GM12878 (cell line): ENCODE measurements at regions of chr15 and their contacts with region 1.

Region 1: GRCh38 chr15:52379395-52380106 is 83.9 kb upstream of the MYO5C start:
- DNase-seq: peak; percentile 91
- ATAC-seq: peak; percentile 71
- H3K4me3 ChIP-seq: peak overlapping the region; percentile 60
- H3K27ac ChIP-seq: peak overlapping the region; percentile 98
- H3K4me1 ChIP-seq: peaks cover 54% of the 10 kb centered on the region
- H3K27me3 ChIP-seq: no peaks in the 10 kb centered on the region
- CTCF ChIP-seq: 0 out of 6 replicates have a peak, but pooled peaks of 1 of the 3 experiments have one; percentile 6
- EP300 ChIP-seq: peak; percentile 42 to 68; a peak in 3 of 4 replicates
- POLR2A ChIP-seq: peak; percentile 56
- RAD21 ChIP-seq: no peak

Region 2: GRCh38 chr15:52018693-52019387 is 360.7 kb before region 1 on chr15 and contains the start of gene MAPK6:
- CTCF ChIA-PET with region 1: no interaction called
- POLR2A ChIA-PET with region 1: no interaction called
- RAD21 ChIA-PET with region 1: no interaction called
- SMC1A ChIA-PET with region 1: interaction called, 3 read pairs
- in situ Hi-C with region 1: loop called (anchors 5 kb)
- intact Hi-C with region 1: no loop called
- DNase-seq: peak; percentile 71
- ATAC-seq: peak; percentile 69
- H3K4me3 ChIP-seq: peak within 1 kb of the TSS; percentile 91
- H3K27ac ChIP-seq: peak within 1 kb of the TSS; percentile 99
- H3K4me1 ChIP-seq: peaks cover 15% of the 10 kb centered on the region
- H3K27me3 ChIP-seq: no peaks in the 10 kb centered on the region
- CTCF ChIP-seq: no peak
- EP300 ChIP-seq: peak in 1 of 2 experiments; percentile 61; a peak in 1 of 4 replicates
- POLR2A ChIP-seq: peak; percentile 88
- RAD21 ChIP-seq: no peak
- polyA plus RNA-seq, gene MAPK6: 20.6 to 23.4 TPM

Region 3: GRCh38 chr15:52438047-52438446 is 58.5 kb after region 1 on chr15:
- CTCF ChIA-PET with region 1: interaction called, 3 read pairs
- POLR2A ChIA-PET with region 1: no interaction called
- RAD21 ChIA-PET with region 1: interaction called, 3 read pairs
- SMC1A ChIA-PET with region 1: interaction called, 10 read pairs
- in situ Hi-C with region 1: no loop called
- intact Hi-C with region 1: no loop called
- DNase-seq: peak; percentile 3
- ATAC-seq: peak; percentile 48
- H3K4me3 ChIP-seq: no peak overlapping the region
- H3K27ac ChIP-seq: peak overlapping the region; percentile 63
- H3K4me1 ChIP-seq: peaks cover 12% of the 10 kb centered on the region
- H3K27me3 ChIP-seq: no peaks in the 10 kb centered on the region
- CTCF ChIP-seq: no peak
- EP300 ChIP-seq: no peak
- POLR2A ChIP-seq: no peak
- RAD21 ChIP-seq: no peak

Region 4: GRCh38 chr15:52528991-52529926 is 149.7 kb after region 1 on chr15:
- CTCF ChIA-PET with region 1: interaction called, 3 read pairs
- POLR2A ChIA-PET with region 1: interaction called, 3 read pairs
- RAD21 ChIA-PET with region 1: interaction called, 6 read pairs
- SMC1A ChIA-PET with region 1: interaction called, 9 read pairs
- in situ Hi-C with region 1: no loop called
- intact Hi-C with region 1: loop called (anchors 5 kb)
- DNase-seq: no peak
- ATAC-seq: peak; percentile 83
- H3K4me3 ChIP-seq: peak overlapping the region; percentile 85
- H3K27ac ChIP-seq: peak overlapping the region; percentile 39; the same call in 1 of the 2 replicates
- H3K4me1 ChIP-seq: peaks cover 3% of the 10 kb centered on the region
- H3K27me3 ChIP-seq: no peaks in the 10 kb centered on the region
- CTCF ChIP-seq: peak in 1 of 3 experiments; percentile 35; a peak in 2 of 6 replicates
- EP300 ChIP-seq: no peak
- POLR2A ChIP-seq: 0 out of 2 replicates have a peak, but pooled peaks have one; percentile 18
- RAD21 ChIP-seq: peak; percentile 46

Region 5: DNA sequence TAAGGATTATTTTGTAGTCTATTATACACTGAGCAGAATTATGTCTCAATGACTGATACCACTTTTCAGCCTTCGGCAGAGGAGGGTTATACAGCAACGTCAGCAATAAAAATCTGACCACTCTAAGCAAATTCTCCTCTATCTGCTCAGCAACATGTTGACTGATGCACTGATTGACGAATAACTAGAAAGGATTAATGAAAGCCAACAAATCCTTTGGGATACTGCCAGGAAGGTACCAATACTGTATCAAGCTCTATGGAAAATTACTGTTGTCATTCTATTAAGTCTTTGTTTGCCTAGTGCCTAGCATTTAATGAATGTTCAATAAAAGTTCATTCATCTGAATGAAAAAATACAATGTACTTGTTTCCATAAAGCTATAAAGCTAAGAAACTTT is 184.1 kb after region 1 on chr15:
- CTCF ChIA-PET with region 1: interaction called, 5 read pairs
- POLR2A ChIA-PET with region 1: interaction called, 4 read pairs
- RAD21 ChIA-PET with region 1: interaction called, 12 read pairs
- SMC1A ChIA-PET with region 1: interaction called, 10 read pairs
- in situ Hi-C with region 1: no loop called
- intact Hi-C with region 1: loop called (anchors 5 kb)
- DNase-seq: no peak
- ATAC-seq: no peak
- H3K4me3 ChIP-seq: peak overlapping the region; percentile 33
- H3K27ac ChIP-seq: no peak overlapping the region
- H3K4me1 ChIP-seq: peaks cover 21% of the 10 kb centered on the region
- H3K27me3 ChIP-seq: no peaks in the 10 kb centered on the region
- CTCF ChIP-seq: no peak
- EP300 ChIP-seq: no peak
- POLR2A ChIP-seq: no peak
- RAD21 ChIP-seq: no peak

Region 6: DNA sequence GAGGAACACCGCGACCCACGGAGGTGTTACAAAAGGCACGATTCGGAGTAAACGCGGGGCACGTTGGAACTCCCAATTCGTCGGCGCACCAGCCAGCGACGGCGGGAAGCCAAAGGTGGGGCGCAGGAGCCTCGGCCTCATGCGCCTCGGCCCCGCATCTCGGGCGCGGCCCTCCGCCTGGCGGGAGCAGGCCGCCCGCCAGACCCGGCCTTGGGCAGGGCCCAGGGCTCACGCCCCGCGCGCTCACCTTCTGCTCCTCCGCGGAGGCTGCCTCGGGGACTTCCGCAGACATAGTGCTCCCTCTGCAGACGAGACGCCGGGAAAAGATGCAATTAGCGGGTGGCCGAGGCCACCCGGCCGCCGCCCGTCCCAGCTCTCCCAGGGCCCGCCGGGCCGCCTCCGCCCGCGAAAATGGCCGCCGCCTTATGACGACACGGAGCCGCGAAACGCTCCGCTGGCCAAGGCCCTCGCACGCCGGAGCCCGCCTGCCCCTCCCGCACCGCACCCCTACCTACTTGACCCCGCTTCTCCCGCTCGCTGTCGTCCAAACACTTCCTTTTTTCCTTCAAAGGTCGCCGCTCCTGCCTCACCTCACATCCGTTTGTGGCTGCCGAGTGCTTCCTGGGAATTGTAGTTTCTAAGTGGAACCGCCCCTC is 189.2 kb after region 1 on chr15 and contains the start of gene ARPP19:
- CTCF ChIA-PET with region 1: interaction called, 5 read pairs
- POLR2A ChIA-PET with region 1: no interaction called
- RAD21 ChIA-PET with region 1: interaction called, 12 read pairs
- SMC1A ChIA-PET with region 1: interaction called, 10 read pairs
- in situ Hi-C with region 1: no loop called
- intact Hi-C with region 1: loop called (anchors 5 kb)
- DNase-seq: peak; percentile 69
- ATAC-seq: peak; percentile 81
- H3K4me3 ChIP-seq: peak within 1 kb of the TSS; percentile 72
- H3K27ac ChIP-seq: peak within 1 kb of the TSS; percentile 93
- H3K4me1 ChIP-seq: peaks cover 7% of the 10 kb centered on the region
- H3K27me3 ChIP-seq: no peaks in the 10 kb centered on the region
- CTCF ChIP-seq: peak in 1 of 3 experiments; percentile 39; a peak in 2 of 6 replicates
- EP300 ChIP-seq: no peak
- POLR2A ChIP-seq: peak; percentile 81
- RAD21 ChIP-seq: peak; percentile 34
- polyA plus RNA-seq, gene ARPP19: 77.2 to 114 TPM